Ascending aorta (tissue), 2 donors: ENCODE measurements at regions of chr4 and their contacts with region 1.

Region 1: GRCh38 chr4:127965062-127965802 is at the starts of genes ABHD18 and MFSD8:
- DNase-seq: peak; percentile 98 to 99
- H3K4me3 ChIP-seq: peak within 1 kb of the TSS; percentile 71 to 86
- H3K27ac ChIP-seq: peak within 1 kb of the TSS; percentile 93 to 94
- H3K4me1 ChIP-seq: peaks cover 0 to 12% of the 10 kb centered on the region in 2 donors
- H3K27me3 ChIP-seq: no peaks in the 10 kb centered on the region
- CTCF ChIP-seq: peak; percentile 39 to 55 (median 46)
- total RNA-seq, gene ABHD18: 3.5 TPM
- total RNA-seq, gene MFSD8: 26.3 TPM

Region 2: DNA sequence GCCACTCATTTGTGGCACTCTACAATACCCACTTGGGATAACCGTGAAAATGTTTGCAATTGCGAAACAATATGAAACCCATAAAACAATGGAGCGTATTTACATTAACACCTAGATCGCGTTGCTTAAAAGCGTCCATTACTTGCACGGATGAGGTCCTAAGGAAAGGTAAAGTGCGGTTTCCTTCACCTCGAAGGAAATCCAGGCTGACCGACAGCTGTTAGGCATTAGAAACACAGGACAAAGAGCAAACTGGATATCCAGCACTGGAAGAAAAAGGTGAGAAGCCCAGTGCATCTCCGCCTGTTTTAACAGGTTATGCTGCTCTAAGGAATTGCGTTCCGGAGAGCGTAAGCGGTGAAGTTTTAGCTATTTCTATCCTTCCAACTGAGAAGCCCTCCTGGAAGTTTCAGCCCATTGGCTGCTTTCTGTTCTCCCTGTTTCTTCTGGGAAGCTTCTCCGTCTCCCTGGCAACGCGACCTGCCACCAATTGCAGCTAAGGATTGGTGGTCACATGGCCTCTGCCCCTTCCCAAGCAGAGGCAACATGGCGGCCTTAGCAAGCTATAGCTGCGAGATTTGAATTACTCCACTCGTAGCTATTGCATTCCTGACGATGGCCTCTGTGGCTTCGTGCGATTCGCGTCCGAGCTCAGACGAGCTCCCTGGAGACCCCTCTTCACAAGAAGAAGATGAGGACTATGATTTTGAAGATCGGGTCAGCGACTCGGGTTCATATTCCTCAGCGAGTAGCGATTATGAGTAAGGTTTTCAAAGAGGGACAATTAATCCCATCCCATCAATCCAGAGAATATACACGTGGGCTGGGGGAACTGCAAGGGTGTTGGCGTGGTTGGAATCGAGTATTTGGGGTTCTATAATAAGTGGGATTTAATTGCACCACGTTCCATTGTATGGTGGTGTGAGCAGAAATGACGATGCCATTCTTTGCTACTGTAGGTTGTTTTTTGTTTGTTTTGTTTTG is 332.5 kb before region 1 on chr4 and contains the start of gene INTU:
- intact Hi-C with region 1: loop called (anchors 2 kb)
- DNase-seq: peak; percentile 87 to 97
- H3K4me3 ChIP-seq: peak within 1 kb of the TSS; percentile 60 to 79
- H3K27ac ChIP-seq: peak within 1 kb of the TSS; percentile 29 to 46
- H3K4me1 ChIP-seq: peaks cover 0 to 3% of the 10 kb centered on the region in 2 donors
- H3K27me3 ChIP-seq: no peaks in the 10 kb centered on the region
- CTCF ChIP-seq: no peak
- total RNA-seq, gene INTU: 3.1 TPM

Region 3: DNA sequence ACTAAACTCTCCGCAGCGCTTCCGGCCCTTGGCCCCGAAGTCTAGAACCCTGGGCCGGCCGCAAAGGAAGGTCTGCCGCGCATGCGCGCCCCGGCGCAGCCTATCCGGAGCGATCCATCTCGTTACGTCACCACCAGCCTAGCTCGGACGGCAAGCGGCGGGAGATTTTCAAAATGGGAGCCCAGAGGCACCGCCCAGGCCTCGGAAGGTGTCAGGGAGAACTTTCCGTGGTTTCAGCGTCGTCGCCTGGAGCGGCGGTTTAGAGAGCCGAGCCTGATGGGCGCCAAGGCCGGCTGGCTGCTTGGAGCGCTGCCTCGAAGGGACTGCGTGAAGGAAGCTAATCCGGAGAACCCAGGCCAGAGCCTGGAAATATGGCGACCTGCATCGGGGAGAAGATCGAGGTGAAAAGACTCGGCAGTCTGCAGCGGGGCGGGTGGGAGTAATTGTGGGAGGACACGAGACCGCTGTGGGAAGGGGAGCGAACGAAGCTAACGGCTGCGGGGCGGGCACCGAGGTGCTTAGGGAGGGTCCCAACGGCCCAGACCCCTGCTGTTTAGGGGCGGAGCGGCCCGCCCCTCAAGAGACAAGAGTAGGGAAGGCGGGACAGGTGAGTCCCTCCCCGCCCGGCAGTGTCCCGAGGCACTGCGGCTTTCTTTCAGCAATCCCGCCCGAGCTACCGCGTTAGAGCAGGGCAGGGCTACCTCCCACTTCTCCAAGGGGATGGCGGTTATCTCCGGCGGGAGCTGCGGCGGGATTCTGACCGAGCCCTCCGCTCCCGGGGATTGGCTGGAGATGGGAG is 84.3 kb before region 1 on chr4 and contains the start of gene PLK4:
- intact Hi-C with region 1: loop called (anchors 2 kb)
- DNase-seq: peak; percentile 84 to 96
- H3K4me3 ChIP-seq: peak within 1 kb of the TSS; percentile 79 to 85
- H3K27ac ChIP-seq: peak within 1 kb of the TSS; percentile 70 to 72
- H3K4me1 ChIP-seq: peaks cover 0 to 4% of the 10 kb centered on the region in 2 donors
- H3K27me3 ChIP-seq: no peaks in the 10 kb centered on the region
- CTCF ChIP-seq: no peak
- total RNA-seq, gene PLK4: not detected